Activated T-helper 1 cell treated with anti-CD3 and anti-CD28 coated beads, Interleukin-12 subunit alpha, Interleukin-12 subunit beta, Interleukin-2, Interleukin-4 antibody, amounts not matched to agents 30 ng/mL and 10 ng/mL and 1 ng/mL, durations not matched to agents 14 hours and 24 hours and 36 hours (primary cell): ENCODE measurements at regions of chr2 and their contacts with region 1.

Region 1: GRCh38 chr2:234257856-234258561 is 207.5 kb downstream of the SPP2 start:
- DNase-seq: no peak
- H3K4me3 Mint-ChIP-seq: no peak overlapping the region
- H3K27ac Mint-ChIP-seq: no peak overlapping the region
- H3K4me1 Mint-ChIP-seq: peaks cover 35% of the 10 kb centered on the region
- H3K27me3 Mint-ChIP-seq: no peaks in the 10 kb centered on the region

Region 2: DNA sequence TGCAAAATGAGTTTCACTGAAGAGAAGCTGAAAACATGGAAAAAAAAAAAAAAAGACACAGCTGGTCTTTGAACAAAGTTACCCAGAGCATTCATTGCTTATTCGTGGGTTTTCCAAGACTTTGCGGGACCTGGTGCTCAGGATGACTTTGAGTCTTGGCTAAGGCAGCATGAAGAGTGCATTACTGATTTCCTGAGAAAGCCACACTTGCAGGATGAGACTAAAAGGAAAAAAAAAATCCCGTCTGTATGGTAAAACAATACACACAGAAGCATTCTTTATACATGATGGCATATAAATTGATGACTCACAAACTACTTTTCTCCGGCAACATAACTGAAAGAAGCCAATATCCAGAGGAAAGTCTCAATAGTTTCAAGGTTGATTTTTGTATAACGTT is 12.1 kb before region 1 on chr2:
- intact Hi-C with region 1: loop called (anchors 2 kb)
- DNase-seq: no peak
- H3K4me3 Mint-ChIP-seq: no peak overlapping the region
- H3K27ac Mint-ChIP-seq: no peak overlapping the region
- H3K4me1 Mint-ChIP-seq: peaks cover 27% of the 10 kb centered on the region
- H3K27me3 Mint-ChIP-seq: peaks cover 6% of the 10 kb centered on the region

Region 3: DNA sequence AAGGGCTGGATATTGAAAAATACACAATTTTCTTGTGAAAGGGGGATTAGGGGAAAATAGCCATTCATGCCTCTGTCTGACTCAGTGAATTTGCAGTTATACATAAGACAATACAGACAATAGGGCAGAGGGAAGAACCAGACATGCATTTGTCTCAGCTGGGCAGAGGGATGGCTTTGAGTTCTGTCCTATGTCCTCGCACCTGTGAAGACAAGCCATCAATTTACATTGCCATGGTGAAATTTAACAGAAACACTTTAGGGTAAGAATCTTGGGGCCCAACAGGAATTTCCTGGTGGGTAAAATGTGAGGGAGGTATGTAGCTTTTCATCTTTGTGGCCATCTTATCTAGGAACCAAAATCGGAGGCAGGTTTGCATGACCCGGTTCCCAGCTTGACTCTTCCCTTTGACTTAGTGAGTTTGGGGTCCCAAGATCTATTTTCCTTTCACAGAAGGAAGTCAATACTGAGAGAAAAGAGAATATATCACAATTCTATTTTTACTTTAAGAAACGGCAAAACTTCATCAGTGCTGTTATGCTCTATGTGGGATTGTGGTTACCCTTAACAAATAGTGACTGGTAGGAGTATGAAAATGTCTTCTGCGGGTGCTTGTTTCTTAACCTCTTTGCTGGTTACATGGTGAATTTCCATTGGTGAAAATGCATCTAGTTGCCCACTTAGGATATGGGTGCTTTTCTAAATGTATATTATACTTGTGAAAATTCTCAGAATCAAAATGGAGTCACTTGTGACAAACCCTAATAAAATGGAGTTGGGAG is 14.3 kb after region 1 on chr2:
- intact Hi-C with region 1: loop called (anchors 1 kb)
- DNase-seq: no peak
- H3K4me3 Mint-ChIP-seq: peak overlapping the region; percentile 40
- H3K27ac Mint-ChIP-seq: peak overlapping the region; percentile 85
- H3K4me1 Mint-ChIP-seq: peaks cover 80% of the 10 kb centered on the region
- H3K27me3 Mint-ChIP-seq: no peaks in the 10 kb centered on the region